Activated T-helper 2 cell treated with anti-CD3 and anti-CD28 coated beads, Interferon-gamma antibody, Interleukin-2, Interleukin-4, amounts not matched to agents 10 μg/mL and 5 μg/mL and 100 μg/mL, durations not matched to agents 14 hours and 24 hours and 36 hours (primary cell): ENCODE measurements at regions of chr2 and their contacts with region 1.

Region 1: GRCh38 chr2:237744613-237745249 is 53.8 kb upstream of the RBM44 start:
- DNase-seq: peak; percentile 53
- H3K4me3 Mint-ChIP-seq: no peak overlapping the region
- H3K27ac Mint-ChIP-seq: peak overlapping the region; percentile 68
- H3K4me1 Mint-ChIP-seq: peaks cover 14% of the 10 kb centered on the region
- H3K27me3 Mint-ChIP-seq: no peaks in the 10 kb centered on the region

Region 2: DNA sequence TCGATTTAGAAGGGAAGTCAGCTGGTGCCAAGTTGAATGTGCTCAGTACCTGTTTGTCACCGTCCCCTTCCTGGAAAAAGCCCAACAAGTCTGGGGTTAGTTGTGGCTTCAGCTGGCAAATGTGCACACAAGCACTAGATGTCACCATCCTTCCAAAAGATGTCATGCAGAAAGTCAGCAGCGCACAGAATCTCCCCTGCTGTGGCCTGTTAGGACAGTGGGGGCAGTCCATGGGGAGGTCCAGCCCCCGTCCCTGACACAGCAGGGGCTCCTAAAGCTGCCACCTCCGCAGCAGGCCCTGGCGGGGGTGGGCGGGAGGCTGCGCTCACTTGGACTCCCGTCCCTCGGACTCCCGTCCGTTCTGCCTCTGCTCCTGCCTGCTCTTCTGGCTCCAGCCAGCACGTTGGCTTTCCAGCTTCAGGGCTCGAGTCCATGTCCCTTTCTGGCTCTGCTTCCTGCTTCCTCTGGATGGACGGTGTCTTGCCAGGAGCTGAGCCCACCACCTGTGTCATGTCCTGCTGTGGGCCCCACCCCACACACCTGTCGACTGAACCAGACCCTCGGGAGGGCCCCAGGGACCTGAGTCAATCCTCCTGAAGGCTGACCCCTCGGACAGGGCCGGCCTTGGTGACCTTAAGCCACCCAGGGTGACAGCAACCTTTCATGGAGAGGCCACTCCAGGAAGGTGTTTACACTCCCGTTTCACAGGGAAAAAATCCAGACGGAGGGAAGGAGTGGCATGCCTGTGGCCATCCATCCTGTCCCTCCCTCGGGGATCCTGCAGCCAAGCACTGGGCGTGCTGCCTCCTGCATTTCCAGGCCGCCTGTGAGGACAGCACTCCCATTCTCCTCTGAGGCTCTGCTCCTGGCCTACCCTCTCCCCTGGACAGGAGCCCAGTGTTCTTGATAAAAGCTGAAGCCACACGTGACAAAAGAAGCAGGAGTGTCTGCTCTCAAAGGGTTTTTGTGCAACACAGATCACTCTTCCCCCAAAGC is 162.7 kb before region 1 on chr2:
- intact Hi-C with region 1: loop called (anchors 2 kb)
- DNase-seq: peak; percentile 23
- H3K4me3 Mint-ChIP-seq: no peak overlapping the region
- H3K27ac Mint-ChIP-seq: no peak overlapping the region
- H3K4me1 Mint-ChIP-seq: no peaks in the 10 kb centered on the region
- H3K27me3 Mint-ChIP-seq: peaks cover 6% of the 10 kb centered on the region

Region 3: DNA sequence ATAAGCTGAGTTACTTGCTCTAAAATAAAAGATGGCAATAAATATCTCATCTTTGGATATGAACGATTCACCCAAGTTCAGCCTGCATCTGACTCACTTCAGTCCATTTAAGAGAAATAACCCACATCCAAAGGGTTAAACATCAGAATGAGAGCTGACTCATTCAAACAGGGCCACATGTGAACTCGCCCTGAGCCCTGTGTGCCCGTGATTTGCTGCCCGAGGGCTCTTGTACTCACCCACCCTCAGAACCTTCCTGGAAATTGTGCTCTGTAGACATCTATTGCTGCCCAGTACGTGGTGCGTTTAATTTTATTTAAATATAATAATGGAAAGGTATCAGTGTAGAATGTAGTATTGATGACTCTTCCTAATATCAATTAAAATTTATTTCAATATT is 13.1 kb before region 1 on chr2:
- intact Hi-C with region 1: loop called (anchors 2 kb)
- DNase-seq: no peak
- H3K4me3 Mint-ChIP-seq: peak overlapping the region; percentile 49
- H3K27ac Mint-ChIP-seq: peak overlapping the region; percentile 91
- H3K4me1 Mint-ChIP-seq: peaks cover 45% of the 10 kb centered on the region
- H3K27me3 Mint-ChIP-seq: no peaks in the 10 kb centered on the region

Region 4: DNA sequence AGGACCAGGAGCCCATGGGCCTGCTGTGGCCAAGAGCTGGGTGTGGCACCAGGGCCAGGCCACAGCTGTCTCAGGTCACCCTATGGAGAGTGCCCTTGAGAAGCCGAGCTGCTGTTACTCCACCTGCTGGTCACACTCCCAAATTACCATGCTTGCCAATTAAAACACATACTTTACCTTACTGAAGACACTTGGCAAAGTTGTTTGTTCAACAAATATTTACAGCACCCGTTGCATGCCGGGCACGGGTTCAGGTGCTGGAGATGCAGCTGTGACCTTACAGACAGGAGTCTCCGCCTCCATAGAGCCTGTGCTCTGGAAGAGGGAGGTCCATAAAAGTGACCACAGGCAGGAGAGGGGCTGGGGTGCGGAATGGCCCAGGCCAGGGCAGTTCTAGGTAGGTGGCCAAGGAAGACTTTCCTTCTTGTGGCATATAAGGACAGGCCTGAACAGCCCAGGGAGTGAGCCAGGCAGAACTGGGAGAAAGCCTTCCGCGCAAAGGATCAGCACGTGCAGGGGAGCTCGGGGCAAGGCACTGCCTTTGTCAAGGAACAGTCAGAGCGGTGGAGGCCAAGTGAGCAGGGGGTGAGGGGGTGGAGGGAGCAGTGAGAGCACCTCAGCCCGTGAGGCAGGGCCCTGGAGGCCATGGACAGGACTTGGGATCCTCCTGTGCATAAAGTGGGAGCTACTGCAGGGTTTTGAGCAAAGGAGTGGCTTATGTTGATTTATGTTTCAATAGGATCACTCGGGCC is 30.2 kb after region 1 on chr2:
- intact Hi-C with region 1: no loop called
- DNase-seq: peak; percentile 33
- H3K4me3 Mint-ChIP-seq: no peak overlapping the region
- H3K27ac Mint-ChIP-seq: peak overlapping the region; percentile 45
- H3K4me1 Mint-ChIP-seq: no peaks in the 10 kb centered on the region
- H3K27me3 Mint-ChIP-seq: no peaks in the 10 kb centered on the region

Region 5: DNA sequence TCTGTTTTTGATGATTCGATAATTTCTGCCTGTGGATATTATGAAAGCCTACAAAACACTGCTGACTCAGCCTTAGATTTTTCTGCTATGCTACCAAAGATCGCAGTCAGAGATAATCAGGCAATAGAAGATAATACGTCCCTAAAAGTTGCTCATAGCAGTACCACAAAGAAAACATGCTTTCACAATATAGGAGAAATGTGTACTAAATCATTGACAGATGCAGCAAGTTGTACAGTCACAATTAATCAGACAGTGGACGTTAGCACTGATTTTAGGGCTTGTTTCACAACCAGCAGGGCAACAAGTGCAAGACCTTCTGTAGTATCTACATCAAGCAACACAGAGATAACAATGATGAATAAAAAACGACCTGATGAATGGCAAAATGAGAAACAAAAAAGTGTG is 73.3 kb after region 1 on chr2:
- intact Hi-C with region 1: no loop called
- DNase-seq: no peak
- H3K4me3 Mint-ChIP-seq: no peak overlapping the region
- H3K27ac Mint-ChIP-seq: no peak overlapping the region
- H3K4me1 Mint-ChIP-seq: peaks cover 27% of the 10 kb centered on the region
- H3K27me3 Mint-ChIP-seq: peaks cover 6% of the 10 kb centered on the region

Region 6: GRCh38 chr2:238288650-238289573 is 544.2 kb after region 1 on chr2:
- intact Hi-C with region 1: no loop called
- DNase-seq: peak; percentile 98
- H3K4me3 Mint-ChIP-seq: peak overlapping the region; percentile 90
- H3K27ac Mint-ChIP-seq: peak overlapping the region; percentile 94
- H3K4me1 Mint-ChIP-seq: peaks cover 31% of the 10 kb centered on the region
- H3K27me3 Mint-ChIP-seq: no peaks in the 10 kb centered on the region